GM12878 (cell line): ENCODE measurements at regions of chr4 and their contacts with region 1.

Region 1: GRCh38 chr4:166594326-166594946 is 639.9 kb downstream of the SPOCK3 start:
- DNase-seq: peak; percentile 13
- ATAC-seq: peak; percentile 100
- H3K4me3 ChIP-seq: no peak overlapping the region
- H3K27ac ChIP-seq: no peak overlapping the region
- H3K4me1 ChIP-seq: no peaks in the 10 kb centered on the region
- H3K27me3 ChIP-seq: no peaks in the 10 kb centered on the region
- CTCF ChIP-seq: peak; percentile 57 to 73 (median 71)
- EP300 ChIP-seq: no peak
- POLR2A ChIP-seq: no peak
- RAD21 ChIP-seq: peak; percentile 83

Region 2: DNA sequence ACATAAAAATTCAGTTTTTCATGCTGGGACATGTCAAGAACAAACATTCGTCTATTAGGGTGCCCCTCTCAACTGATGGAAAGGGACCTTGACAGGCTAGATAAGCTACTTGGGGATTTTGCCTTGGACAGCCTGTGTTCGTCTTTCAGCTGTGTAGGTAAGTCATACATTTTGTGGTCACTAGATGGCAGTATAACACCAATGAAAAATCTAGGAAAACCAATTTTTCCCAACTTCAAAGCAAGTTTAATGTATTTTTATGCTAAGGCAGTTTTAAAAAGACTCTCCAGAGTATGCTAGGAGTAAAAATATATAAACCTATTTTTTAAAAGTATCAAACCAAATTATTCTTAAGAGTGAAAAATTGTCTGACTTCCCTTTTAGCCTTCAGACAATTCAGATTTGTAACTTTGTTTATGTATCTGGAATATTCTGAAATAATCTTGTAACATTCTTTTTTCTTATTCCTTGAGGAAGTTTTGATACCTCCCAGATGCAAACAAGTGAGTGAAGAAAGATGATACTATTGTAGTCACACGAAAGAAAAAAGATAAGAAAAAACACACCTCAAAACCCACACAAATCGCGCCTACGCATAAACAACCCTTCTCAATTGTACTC is 1057.3 kb before region 1 on chr4:
- CTCF ChIA-PET with region 1: no interaction called
- POLR2A ChIA-PET with region 1: no interaction called
- RAD21 ChIA-PET with region 1: interaction called, 3 read pairs
- SMC1A ChIA-PET with region 1: no interaction called
- in situ Hi-C with region 1: loop called (anchors 25 kb)
- intact Hi-C with region 1: no loop called
- DNase-seq: no peak
- ATAC-seq: peak; percentile 79
- H3K4me3 ChIP-seq: no peak overlapping the region
- H3K27ac ChIP-seq: no peak overlapping the region
- H3K4me1 ChIP-seq: no peaks in the 10 kb centered on the region
- H3K27me3 ChIP-seq: no peaks in the 10 kb centered on the region; a peak in 1 of 4 replicates
- CTCF ChIP-seq: peak; percentile 45 to 67 (median 54); a peak in 5 of 6 replicates
- EP300 ChIP-seq: no peak
- POLR2A ChIP-seq: no peak
- RAD21 ChIP-seq: peak; percentile 69

Region 3: GRCh38 chr4:166259081-166259480 is 335.4 kb before region 1 on chr4:
- CTCF ChIA-PET with region 1: no interaction called
- POLR2A ChIA-PET with region 1: no interaction called
- RAD21 ChIA-PET with region 1: no interaction called
- SMC1A ChIA-PET with region 1: no interaction called
- in situ Hi-C with region 1: no loop called
- intact Hi-C with region 1: no loop called
- DNase-seq: no peak
- ATAC-seq: no peak
- H3K4me3 ChIP-seq: no peak overlapping the region
- H3K27ac ChIP-seq: no peak overlapping the region
- H3K4me1 ChIP-seq: no peaks in the 10 kb centered on the region
- H3K27me3 ChIP-seq: no peaks in the 10 kb centered on the region
- CTCF ChIP-seq: no peak
- EP300 ChIP-seq: no peak
- POLR2A ChIP-seq: no peak
- RAD21 ChIP-seq: no peak

Region 4: DNA sequence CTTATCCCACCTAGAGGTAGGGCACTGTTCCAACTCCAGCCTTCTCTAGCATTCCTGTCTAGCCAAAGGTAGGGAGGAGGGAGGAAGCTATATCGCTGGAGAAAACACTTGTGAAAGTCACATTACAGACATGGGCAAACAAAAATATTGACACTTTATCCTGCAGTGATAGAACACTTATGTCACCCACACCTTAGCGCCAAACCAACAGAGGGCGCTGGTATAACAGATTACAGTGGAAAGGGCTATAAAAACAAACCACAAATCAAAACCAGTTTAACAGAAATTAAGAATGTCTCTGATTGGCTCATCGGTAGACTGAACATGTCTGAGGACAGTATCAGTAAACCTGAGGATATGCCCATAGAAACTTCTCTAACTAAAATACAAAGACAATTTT is 270.1 kb before region 1 on chr4:
- CTCF ChIA-PET with region 1: interaction called, 22 read pairs
- POLR2A ChIA-PET with region 1: no interaction called
- RAD21 ChIA-PET with region 1: interaction called, 5 read pairs
- SMC1A ChIA-PET with region 1: interaction called, 6 read pairs
- in situ Hi-C with region 1: no loop called
- intact Hi-C with region 1: loop called (anchors 2 kb)
- DNase-seq: no peak
- ATAC-seq: peak; percentile 61
- H3K4me3 ChIP-seq: no peak overlapping the region
- H3K27ac ChIP-seq: no peak overlapping the region
- H3K4me1 ChIP-seq: no peaks in the 10 kb centered on the region
- H3K27me3 ChIP-seq: no peaks in the 10 kb centered on the region
- CTCF ChIP-seq: peak; percentile 20 to 40 (median 40); a peak in 4 of 6 replicates
- EP300 ChIP-seq: no peak
- POLR2A ChIP-seq: no peak
- RAD21 ChIP-seq: peak; percentile 67

Region 5: GRCh38 chr4:166501941-166502382 is 92.5 kb before region 1 on chr4:
- CTCF ChIA-PET with region 1: no interaction called
- POLR2A ChIA-PET with region 1: no interaction called
- RAD21 ChIA-PET with region 1: no interaction called
- SMC1A ChIA-PET with region 1: no interaction called
- in situ Hi-C with region 1: no loop called
- intact Hi-C with region 1: no loop called
- DNase-seq: no peak
- ATAC-seq: no peak
- H3K4me3 ChIP-seq: no peak overlapping the region
- H3K27ac ChIP-seq: no peak overlapping the region
- H3K4me1 ChIP-seq: no peaks in the 10 kb centered on the region
- H3K27me3 ChIP-seq: no peaks in the 10 kb centered on the region
- CTCF ChIP-seq: peak in 2 of 3 experiments; percentile 14 to 18; a peak in 3 of 6 replicates
- EP300 ChIP-seq: no peak
- POLR2A ChIP-seq: no peak
- RAD21 ChIP-seq: peak; percentile 47

Region 6: GRCh38 chr4:167014944-167015343 is 420.5 kb after region 1 on chr4:
- CTCF ChIA-PET with region 1: interaction called, 5 read pairs
- POLR2A ChIA-PET with region 1: no interaction called
- RAD21 ChIA-PET with region 1: interaction called, 3 read pairs
- SMC1A ChIA-PET with region 1: no interaction called
- in situ Hi-C with region 1: no loop called
- intact Hi-C with region 1: loop called (anchors 10 kb)
- DNase-seq: no peak
- ATAC-seq: no peak
- H3K4me3 ChIP-seq: no peak overlapping the region
- H3K27ac ChIP-seq: no peak overlapping the region
- H3K4me1 ChIP-seq: no peaks in the 10 kb centered on the region
- H3K27me3 ChIP-seq: no peaks in the 10 kb centered on the region
- CTCF ChIP-seq: no peak
- EP300 ChIP-seq: no peak
- POLR2A ChIP-seq: no peak
- RAD21 ChIP-seq: peak; percentile 12; the same call in 1 of the 2 replicates

Region 7: DNA sequence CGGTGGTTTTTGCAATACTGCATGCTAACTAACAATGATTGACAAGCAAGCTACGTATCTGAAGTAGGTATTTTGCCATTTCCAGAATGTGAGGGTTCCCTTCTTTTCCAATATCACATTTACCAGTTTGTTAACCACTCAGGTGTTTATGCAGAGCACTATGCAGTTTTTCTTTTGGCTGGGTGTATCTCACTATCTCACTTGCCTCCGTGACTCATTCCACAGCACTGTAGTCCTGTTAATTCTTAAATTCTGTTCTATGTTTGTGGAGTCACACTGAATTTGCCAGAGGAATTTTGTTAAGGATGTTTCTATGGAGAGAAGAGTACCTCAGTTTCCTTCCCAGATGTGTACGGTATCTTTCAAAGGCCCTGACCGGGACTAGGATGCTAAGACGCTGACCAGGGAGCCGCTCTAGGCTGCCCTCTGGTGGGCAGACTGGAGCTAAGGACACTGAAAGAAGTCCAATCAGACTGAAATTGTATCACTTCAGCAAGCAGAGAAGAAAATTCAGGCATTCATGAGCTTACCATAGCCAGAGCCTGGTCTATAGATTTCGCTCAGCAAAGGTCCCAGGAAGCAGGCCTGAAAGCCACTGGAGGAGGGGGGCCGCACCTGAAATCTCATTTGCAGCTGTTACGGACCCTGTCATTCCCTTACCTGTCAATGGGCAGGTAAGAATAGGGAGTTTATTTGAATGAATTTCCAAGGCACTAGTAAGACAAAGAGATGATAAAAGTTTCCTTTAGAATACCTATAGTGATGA is 1028.2 kb after region 1 on chr4:
- CTCF ChIA-PET with region 1: interaction called, 4 read pairs
- POLR2A ChIA-PET with region 1: no interaction called
- RAD21 ChIA-PET with region 1: no interaction called
- SMC1A ChIA-PET with region 1: no interaction called
- in situ Hi-C with region 1: no loop called
- intact Hi-C with region 1: loop called (anchors 10 kb)
- DNase-seq: no peak
- ATAC-seq: peak; percentile 99
- H3K4me3 ChIP-seq: no peak overlapping the region
- H3K27ac ChIP-seq: no peak overlapping the region
- H3K4me1 ChIP-seq: no peaks in the 10 kb centered on the region
- H3K27me3 ChIP-seq: no peaks in the 10 kb centered on the region
- CTCF ChIP-seq: peak; percentile 63 to 82 (median 81)
- EP300 ChIP-seq: no peak
- POLR2A ChIP-seq: no peak
- RAD21 ChIP-seq: peak; percentile 70